ENCODE measurements at regions of chr13 and their contacts with region 1.

Region 1: GRCh38 chr13:30257468-30258099 is 49.8 kb downstream of the KATNAL1 start:
- DNase-seq: no peak
- ATAC-seq: peak; percentile 55
- H3K4me3 ChIP-seq: no peak overlapping the region
- H3K27ac ChIP-seq: no peak overlapping the region
- H3K4me1 ChIP-seq: peaks cover 11% of the 10 kb centered on the region
- H3K27me3 ChIP-seq: no peaks in the 10 kb centered on the region
- CTCF ChIP-seq: no peak
- EP300 ChIP-seq: no peak
- POLR2A ChIP-seq: no peak
- RAD21 ChIP-seq: no peak

Region 2: DNA sequence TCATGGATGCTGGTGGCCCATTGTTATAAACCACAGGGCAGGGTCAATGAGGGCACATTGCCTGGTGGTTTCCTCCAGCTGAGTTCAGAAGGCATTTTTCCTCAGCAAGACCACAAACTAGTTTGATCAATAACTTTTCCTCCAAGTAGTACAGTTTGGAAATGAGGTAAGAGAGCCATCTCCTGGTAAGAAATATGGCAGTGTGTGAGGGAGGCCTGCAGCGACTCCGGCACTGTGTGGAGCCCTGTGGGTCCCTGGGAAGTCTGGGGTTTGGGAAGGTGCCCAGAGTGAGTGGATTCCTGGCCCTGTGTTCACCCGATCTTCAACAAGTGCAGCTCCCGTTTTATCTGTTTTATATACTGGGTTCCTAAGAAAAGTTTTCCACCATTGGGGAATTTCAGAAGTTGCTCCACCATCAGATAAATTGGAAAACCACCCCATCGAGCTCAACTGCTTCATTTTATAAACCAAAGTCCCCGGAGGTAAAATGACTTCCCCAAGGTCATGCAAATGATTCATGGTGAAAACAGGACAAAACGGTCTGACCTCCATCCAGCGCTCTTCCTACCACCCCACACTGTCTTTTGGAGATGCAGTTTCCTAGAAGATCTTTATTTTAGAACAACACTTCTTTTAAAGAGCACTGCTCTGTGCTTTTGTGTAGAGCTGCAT is 98.7 kb before region 1 on chr13:
- CTCF ChIA-PET with region 1: no interaction called
- POLR2A ChIA-PET with region 1: no interaction called
- RAD21 ChIA-PET with region 1: no interaction called
- SMC1A ChIA-PET with region 1: no interaction called
- in situ Hi-C with region 1: no loop called
- intact Hi-C with region 1: no loop called
- DNase-seq: no peak
- ATAC-seq: peak; percentile 61
- H3K4me3 ChIP-seq: no peak overlapping the region
- H3K27ac ChIP-seq: 0 out of 2 replicates have a peak overlapping the region, but pooled peaks have one; percentile 1
- H3K4me1 ChIP-seq: peaks cover 33% of the 10 kb centered on the region
- H3K27me3 ChIP-seq: no peaks in the 10 kb centered on the region
- CTCF ChIP-seq: peak in 2 of 3 experiments; percentile 33 to 40; a peak in 4 of 6 replicates
- EP300 ChIP-seq: no peak
- POLR2A ChIP-seq: no peak
- RAD21 ChIP-seq: peak; percentile 68

Region 3: GRCh38 chr13:30241532-30241931 is 16.1 kb before region 1 on chr13:
- CTCF ChIA-PET with region 1: interaction called, 3 read pairs
- POLR2A ChIA-PET with region 1: interaction called, 4 read pairs
- RAD21 ChIA-PET with region 1: interaction called, 5 read pairs
- SMC1A ChIA-PET with region 1: interaction called, 15 read pairs
- in situ Hi-C with region 1: no loop called
- intact Hi-C with region 1: no loop called
- DNase-seq: peak; percentile 56
- ATAC-seq: peak; percentile 93
- H3K4me3 ChIP-seq: no peak overlapping the region
- H3K27ac ChIP-seq: no peak overlapping the region
- H3K4me1 ChIP-seq: peaks cover 2% of the 10 kb centered on the region; the same call in 1 of the 2 replicates
- H3K27me3 ChIP-seq: no peaks in the 10 kb centered on the region
- CTCF ChIP-seq: no peak
- EP300 ChIP-seq: peak in 1 of 2 experiments; percentile 60; a peak in 1 of 4 replicates
- POLR2A ChIP-seq: no peak
- RAD21 ChIP-seq: no peak; the same call in 1 of the 2 replicates

Region 4: GRCh38 chr13:30268673-30269072 is 11.1 kb after region 1 on chr13:
- CTCF ChIA-PET with region 1: no interaction called
- POLR2A ChIA-PET with region 1: no interaction called
- RAD21 ChIA-PET with region 1: no interaction called
- SMC1A ChIA-PET with region 1: interaction called, 10 read pairs
- in situ Hi-C with region 1: no loop called
- intact Hi-C with region 1: no loop called
- DNase-seq: no peak
- ATAC-seq: peak; percentile 31; the same call in 2 of the 3 replicates
- H3K4me3 ChIP-seq: no peak overlapping the region
- H3K27ac ChIP-seq: no peak overlapping the region; the same call in 1 of the 2 replicates
- H3K4me1 ChIP-seq: no peaks in the 10 kb centered on the region
- H3K27me3 ChIP-seq: no peaks in the 10 kb centered on the region
- CTCF ChIP-seq: no peak
- EP300 ChIP-seq: no peak
- POLR2A ChIP-seq: no peak
- RAD21 ChIP-seq: no peak

Region 5: GRCh38 chr13:30551189-30551588 is 293.6 kb after region 1 on chr13:
- CTCF ChIA-PET with region 1: no interaction called
- POLR2A ChIA-PET with region 1: no interaction called
- RAD21 ChIA-PET with region 1: no interaction called
- SMC1A ChIA-PET with region 1: no interaction called
- in situ Hi-C with region 1: no loop called
- intact Hi-C with region 1: loop called (anchors 10 kb)
- DNase-seq: no peak
- ATAC-seq: peak; percentile 99
- H3K4me3 ChIP-seq: no peak overlapping the region
- H3K27ac ChIP-seq: no peak overlapping the region
- H3K4me1 ChIP-seq: no peaks in the 10 kb centered on the region
- H3K27me3 ChIP-seq: no peaks in the 10 kb centered on the region
- CTCF ChIP-seq: peak; percentile 47 to 72 (median 52); a peak in 5 of 6 replicates
- EP300 ChIP-seq: no peak
- POLR2A ChIP-seq: no peak
- RAD21 ChIP-seq: peak; percentile 72

Region 6: GRCh38 chr13:31408927-31409326 is 1151.3 kb after region 1 on chr13:
- CTCF ChIA-PET with region 1: no interaction called
- POLR2A ChIA-PET with region 1: no interaction called
- RAD21 ChIA-PET with region 1: no interaction called
- SMC1A ChIA-PET with region 1: no interaction called
- in situ Hi-C with region 1: no loop called
- intact Hi-C with region 1: no loop called
- DNase-seq: no peak
- ATAC-seq: no peak
- H3K4me3 ChIP-seq: no peak overlapping the region
- H3K27ac ChIP-seq: no peak overlapping the region
- H3K4me1 ChIP-seq: no peaks in the 10 kb centered on the region
- H3K27me3 ChIP-seq: no peaks in the 10 kb centered on the region
- CTCF ChIP-seq: no peak
- EP300 ChIP-seq: no peak
- POLR2A ChIP-seq: no peak
- RAD21 ChIP-seq: no peak

Measured in GM12878 (cell line).